GM13977 (cell line): ENCODE measurements at regions of chr9 and their contacts with region 1.

Region 1: DNA sequence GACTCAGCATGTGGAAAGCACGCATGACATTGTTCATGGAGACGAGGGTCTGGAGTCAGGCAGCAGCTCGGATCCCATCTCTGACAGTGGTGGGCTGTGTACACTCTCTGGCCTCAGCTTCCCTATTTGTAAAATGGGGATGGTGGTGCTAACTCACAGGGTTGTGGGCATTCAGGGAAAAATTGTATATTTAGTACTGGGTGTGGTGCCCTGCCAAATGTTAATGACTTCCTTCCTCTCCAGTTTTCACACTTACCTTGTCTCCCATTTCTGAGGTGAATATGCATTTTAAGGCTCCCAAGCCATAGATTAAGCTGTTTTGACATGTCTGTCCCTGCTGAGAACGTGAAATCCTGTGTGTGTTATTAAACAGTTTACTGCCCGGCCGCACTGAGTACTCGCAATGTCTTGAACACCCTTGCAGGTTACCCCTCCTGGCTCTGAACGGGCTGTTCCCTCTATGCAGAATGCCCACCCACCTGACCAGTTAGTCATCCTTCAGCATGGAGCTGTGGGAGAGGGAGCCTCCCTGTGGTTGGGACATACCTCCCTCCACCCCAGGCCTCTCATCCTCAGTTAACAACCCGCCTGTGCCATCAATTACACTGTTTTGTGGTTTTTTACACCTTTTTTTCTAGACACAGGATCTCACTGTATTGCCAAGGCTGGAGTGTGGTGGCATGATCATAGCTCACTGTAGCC is 25.8 kb downstream of the TJP2 start:
- DNase-seq: no peak
- CTCF ChIP-seq: no peak

Region 2: DNA sequence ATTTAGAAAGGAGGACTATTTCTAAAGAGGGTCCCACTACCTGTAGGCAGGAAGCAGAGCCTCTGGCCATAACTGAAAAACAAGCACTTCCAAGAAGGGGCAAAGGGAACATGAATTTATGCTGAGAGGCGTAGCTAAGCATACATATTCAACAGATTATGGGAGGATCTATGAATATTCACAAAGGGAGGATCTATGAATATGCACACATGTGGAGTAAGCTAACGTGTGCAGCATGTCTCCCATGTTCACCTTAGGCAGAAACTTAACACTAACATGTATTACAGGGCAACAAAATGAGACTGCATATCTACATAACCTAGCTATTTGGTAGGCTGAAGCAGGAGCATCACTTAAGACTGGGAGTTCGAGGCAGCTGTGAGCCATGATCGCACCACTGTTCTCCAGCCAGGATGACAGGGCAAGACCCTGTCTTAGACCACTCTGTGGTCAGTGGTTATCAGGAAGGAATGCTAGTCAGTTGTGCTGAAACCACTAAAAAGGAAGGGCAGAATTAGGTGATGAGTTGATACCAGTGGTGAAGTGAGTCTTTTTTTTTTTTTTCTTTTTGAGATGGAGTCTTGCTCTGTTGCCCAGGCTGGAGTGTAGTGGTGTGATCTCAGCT is 143.6 kb before region 1 on chr9:
- in situ Hi-C with region 1: loop called (anchors 10 kb)
- DNase-seq: no peak
- CTCF ChIP-seq: no peak